ENCODE measurements at regions of chr18 and their contacts with region 1.

Region 1: DNA sequence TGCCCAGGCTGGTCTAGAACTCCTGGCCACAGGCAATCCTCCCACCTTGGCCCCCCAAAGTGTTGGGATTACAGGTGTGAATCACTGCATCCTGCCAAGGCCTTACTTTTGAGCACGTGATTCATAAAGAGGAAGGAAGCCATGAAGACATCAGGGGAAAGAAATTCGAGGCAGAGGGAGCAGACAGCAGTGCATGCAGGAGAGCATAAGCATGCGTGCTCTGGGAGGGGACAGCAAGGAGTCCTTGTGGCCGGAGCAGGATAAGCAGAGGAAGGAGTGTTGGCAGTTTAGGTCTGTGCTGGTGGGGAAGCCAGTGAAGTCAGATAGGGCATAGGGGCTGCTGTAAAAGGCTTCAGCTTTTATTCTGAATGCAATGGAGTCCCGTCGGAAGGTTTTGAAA is 400.5 kb upstream of the RAB12 start:
- DNase-seq: no peak
- ATAC-seq: no peak
- H3K4me3 ChIP-seq: no peak overlapping the region
- H3K27ac ChIP-seq: no peak overlapping the region
- H3K4me1 ChIP-seq: no peaks in the 10 kb centered on the region
- H3K27me3 ChIP-seq: no peaks in the 10 kb centered on the region

Region 2: GRCh38 chr18:8254654-8255053 is 45.9 kb after region 1 on chr18:
- intact Hi-C with region 1: loop called in 1 of 4 experiments (anchors 5 kb)
- DNase-seq: no peak
- ATAC-seq: peak; percentile 53 to 68
- H3K4me3 ChIP-seq: no peak overlapping the region
- H3K27ac ChIP-seq: no peak overlapping the region
- H3K4me1 ChIP-seq: peaks cover 3% of the 10 kb centered on the region
- H3K27me3 ChIP-seq: no peaks in the 10 kb centered on the region

Measured in right cardiac atrium (tissue), 5 donors.